Prostate gland (tissue), 2 donors: ENCODE measurements at regions of chr13 and their contacts with region 1.

Region 1: DNA sequence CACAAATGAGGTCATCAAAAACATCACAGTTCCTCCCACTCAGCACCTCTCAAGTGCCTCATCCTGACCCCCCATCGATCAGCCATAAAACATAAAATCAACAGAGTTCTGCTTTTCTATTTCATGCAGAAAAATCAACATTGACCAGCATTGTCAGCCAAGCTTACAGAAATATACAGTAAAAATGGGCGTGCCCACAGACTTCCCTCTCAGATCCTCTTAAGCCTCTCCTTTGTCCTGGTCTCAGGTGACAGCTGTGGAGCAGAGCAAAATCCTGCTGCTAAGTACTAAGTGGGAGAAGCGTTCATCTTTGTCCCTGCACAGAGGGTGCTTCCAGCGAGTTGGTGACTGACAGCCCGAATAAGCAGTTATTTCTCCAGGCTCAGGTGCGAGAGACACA is 213.3 kb downstream of the OLFM4 start:
- DNase-seq: no peak
- H3K4me3 ChIP-seq: no peak overlapping the region
- H3K27ac ChIP-seq: no peak overlapping the region
- H3K4me1 ChIP-seq: no peaks in the 10 kb centered on the region
- H3K27me3 ChIP-seq: no peaks in the 10 kb centered on the region
- CTCF ChIP-seq: no peak
- POLR2A ChIP-seq: no peak

Region 2: DNA sequence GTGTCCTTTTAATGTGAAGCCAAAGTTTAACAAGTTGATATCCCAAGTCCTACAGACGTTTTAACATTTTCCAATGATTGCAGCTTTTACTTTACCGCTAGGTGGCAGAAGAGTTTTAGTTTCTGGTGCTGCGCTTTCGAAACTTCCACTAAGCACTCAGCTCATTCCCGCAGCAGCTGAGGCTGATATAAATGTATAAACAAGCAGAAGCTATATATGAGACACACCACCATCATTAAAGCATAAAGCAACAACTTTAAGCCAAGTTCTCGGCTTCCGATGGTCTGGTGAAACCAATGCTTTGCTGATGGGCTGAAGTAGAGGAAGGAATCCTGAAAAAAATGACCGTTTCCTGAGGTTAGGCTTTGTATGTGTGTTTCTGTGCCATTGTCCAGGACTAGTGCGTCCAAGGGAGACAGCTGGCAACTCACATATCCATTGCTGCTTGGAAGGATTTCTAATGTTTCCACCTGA is 540.6 kb after region 1 on chr13:
- intact Hi-C with region 1: loop called (anchors 10 kb)
- DNase-seq: peak; percentile 46
- H3K4me3 ChIP-seq: no peak overlapping the region
- H3K27ac ChIP-seq: no peak overlapping the region
- H3K4me1 ChIP-seq: no peaks in the 10 kb centered on the region
- H3K27me3 ChIP-seq: no peaks in the 10 kb centered on the region
- CTCF ChIP-seq: peak; percentile 15 to 83 (median 70)
- POLR2A ChIP-seq: no peak